Activated naive CD4-positive, alpha-beta T cell treated with anti-CD3 and anti-CD28 coated beads for 36 hours (primary cell): ENCODE measurements at regions of chr14 and their contacts with region 1.

Region 1: GRCh38 chr14:22918804-22919600 is at the start of gene RBM23:
- DNase-seq: peak; percentile 100
- H3K4me3 Mint-ChIP-seq: peak within 1 kb of the TSS; percentile 94
- H3K27ac Mint-ChIP-seq: peak within 1 kb of the TSS; percentile 99
- H3K4me1 Mint-ChIP-seq: peaks cover 42% of the 10 kb centered on the region
- H3K27me3 Mint-ChIP-seq: peaks cover 3% of the 10 kb centered on the region
- total RNA-seq, gene RBM23: 53.5 to 61.2 TPM

Region 2: GRCh38 chr14:22589096-22589839 is 329.7 kb before region 1 on chr14 and contains the start of gene DAD1:
- CTCF ChIA-PET with region 1: no interaction called
- intact Hi-C with region 1: loop called (anchors 1 kb)
- DNase-seq: peak; percentile 100
- H3K4me3 Mint-ChIP-seq: peak within 1 kb of the TSS; percentile 98
- H3K27ac Mint-ChIP-seq: peak within 1 kb of the TSS; percentile 99
- H3K4me1 Mint-ChIP-seq: peaks cover 68% of the 10 kb centered on the region
- H3K27me3 Mint-ChIP-seq: no peaks in the 10 kb centered on the region
- total RNA-seq, gene DAD1: 219 to 226 TPM

Region 3: DNA sequence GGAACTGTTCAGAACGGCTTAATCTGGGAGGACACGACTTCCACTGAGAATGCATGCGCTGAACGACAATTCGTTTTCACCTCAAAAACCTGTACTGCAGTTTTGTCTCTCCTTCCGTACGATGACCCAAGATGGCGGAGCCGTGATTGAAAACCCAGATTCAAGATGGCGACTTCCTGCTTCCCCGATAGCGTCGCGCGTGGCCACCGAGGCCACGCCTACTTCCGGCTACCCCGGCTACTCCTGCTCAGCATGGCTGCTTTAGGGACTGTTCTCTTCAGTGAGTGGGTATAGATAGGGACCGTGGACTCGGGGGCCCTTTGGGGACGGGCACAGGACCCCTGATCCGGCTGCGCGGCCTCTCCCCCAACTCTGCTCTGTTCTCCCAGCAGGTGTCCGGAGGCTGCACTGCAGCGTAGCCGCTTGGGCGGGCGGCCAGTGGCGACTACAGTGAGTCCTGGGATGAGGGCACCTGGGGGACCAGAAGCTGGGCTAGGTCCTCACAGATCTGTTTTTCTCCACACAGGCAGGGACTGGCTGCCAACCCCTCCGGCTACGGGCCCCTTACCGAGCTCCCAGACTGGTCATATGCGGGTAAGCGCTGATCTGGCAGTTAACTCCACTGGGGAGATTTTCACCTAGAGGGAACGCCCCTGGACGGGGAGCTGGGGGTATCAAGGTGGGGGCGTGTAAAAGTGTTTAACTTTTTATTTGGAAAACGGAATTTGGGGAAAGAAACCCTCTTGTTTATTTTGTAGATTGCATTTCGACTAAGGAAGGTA is 89.2 kb before region 1 on chr14 and contains the start of gene MRPL52:
- CTCF ChIA-PET with region 1: interaction called, 5 read pairs
- intact Hi-C with region 1: loop called (anchors 2 kb)
- DNase-seq: peak; percentile 94
- H3K4me3 Mint-ChIP-seq: peak within 1 kb of the TSS; percentile 94
- H3K27ac Mint-ChIP-seq: peak within 1 kb of the TSS; percentile 97
- H3K4me1 Mint-ChIP-seq: peaks cover 34% of the 10 kb centered on the region
- H3K27me3 Mint-ChIP-seq: no peaks in the 10 kb centered on the region
- total RNA-seq, gene MRPL52: 170 TPM

Region 4: DNA sequence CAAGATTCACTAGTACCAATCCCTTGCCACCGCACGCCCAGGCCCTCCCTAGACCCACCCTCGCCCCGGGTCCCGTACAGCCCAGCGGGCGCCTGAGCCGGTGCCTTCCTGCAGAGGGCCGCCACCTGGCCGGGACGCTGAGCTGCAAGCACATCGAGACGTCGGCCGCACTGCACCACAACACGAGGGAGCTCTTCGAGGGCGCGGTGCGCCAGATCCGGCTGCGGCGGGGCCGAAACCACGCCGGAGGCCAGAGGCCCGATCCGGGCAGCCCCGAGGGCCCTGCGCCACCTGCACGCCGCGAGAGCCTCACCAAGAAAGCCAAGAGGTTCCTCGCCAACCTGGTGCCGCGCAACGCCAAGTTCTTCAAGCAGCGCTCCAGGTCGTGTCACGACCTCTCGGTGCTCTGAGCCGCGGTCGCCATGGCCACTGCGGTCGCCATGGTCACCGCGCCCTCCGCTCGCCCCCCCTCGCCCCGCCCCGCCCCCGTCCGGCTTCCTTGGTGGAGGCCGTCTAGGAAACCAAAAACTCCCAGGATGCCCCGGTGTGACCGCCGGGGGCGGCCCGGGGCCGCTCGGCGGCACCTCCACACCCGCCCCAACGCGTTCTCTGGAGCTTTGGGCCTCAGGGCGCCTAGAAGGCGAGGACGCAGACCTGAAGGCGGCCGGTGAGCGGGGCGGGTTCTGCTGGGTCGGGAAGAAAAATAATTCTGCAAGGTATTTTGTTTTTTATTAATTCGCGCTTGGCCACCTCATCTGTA is 32.3 kb before region 1 on chr14:
- CTCF ChIA-PET with region 1: interaction called, 6 read pairs
- intact Hi-C with region 1: loop called (anchors 1 kb)
- DNase-seq: peak; percentile 87
- H3K4me3 Mint-ChIP-seq: peak overlapping the region; percentile 83
- H3K27ac Mint-ChIP-seq: peak overlapping the region; percentile 84
- H3K4me1 Mint-ChIP-seq: peaks cover 50% of the 10 kb centered on the region
- H3K27me3 Mint-ChIP-seq: peaks cover 2% of the 10 kb centered on the region

Region 5: GRCh38 chr14:22955702-22956569 is 36.9 kb after region 1 on chr14:
- CTCF ChIA-PET with region 1: no interaction called
- intact Hi-C with region 1: loop called (anchors 1 kb)
- DNase-seq: no peak
- H3K4me3 Mint-ChIP-seq: peak overlapping the region; percentile 89
- H3K27ac Mint-ChIP-seq: peak overlapping the region; percentile 84
- H3K4me1 Mint-ChIP-seq: peaks cover 22% of the 10 kb centered on the region
- H3K27me3 Mint-ChIP-seq: no peaks in the 10 kb centered on the region

Region 6: DNA sequence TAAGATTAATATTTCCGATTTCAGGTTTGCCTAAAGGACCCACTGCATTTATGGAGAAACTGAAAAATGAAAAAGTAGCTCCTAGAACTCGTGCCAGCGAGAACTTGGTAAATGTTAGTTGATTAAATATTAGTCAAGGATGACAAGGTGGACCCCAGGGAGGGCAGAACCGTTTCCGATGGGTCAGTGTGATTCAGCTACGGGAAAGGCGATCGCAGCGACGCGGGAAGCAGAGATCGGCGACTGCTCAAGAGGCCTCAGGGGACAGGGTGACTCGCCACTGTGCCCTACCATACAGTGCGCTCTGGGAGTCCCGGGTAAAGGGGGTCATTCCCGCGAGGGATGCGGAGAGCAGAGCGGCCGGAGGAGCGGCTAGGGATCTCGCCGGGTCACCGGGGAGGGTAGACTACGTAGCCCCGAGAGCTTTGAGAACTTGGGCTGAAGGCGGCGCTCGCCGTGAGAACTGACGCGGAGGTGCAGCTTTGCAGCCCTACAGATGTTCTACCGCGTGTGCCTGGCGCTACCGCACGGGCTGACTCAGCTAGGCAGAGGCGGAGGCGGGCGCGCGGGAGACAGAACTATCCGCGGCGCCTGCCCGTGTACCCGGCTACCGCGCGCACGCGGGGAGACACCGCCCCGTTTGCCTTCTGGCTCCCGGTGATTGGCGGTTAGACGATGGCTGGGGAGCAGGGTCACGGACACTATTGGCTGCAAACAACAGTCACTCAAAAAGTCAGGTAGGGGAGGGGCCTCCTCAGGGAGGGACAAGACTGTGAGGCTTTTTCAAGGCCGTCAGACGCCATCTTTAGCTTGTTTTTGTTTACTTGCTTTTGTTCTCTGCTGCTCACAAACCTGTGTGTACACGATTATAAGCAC is 87.8 kb after region 1 on chr14:
- CTCF ChIA-PET with region 1: no interaction called
- intact Hi-C with region 1: loop called (anchors 1 kb)
- DNase-seq: peak; percentile 99
- H3K4me3 Mint-ChIP-seq: peak overlapping the region; percentile 96
- H3K27ac Mint-ChIP-seq: peak overlapping the region; percentile 98
- H3K4me1 Mint-ChIP-seq: peaks cover 36% of the 10 kb centered on the region
- H3K27me3 Mint-ChIP-seq: no peaks in the 10 kb centered on the region

Region 7: GRCh38 chr14:23034483-23035302 is 115.7 kb after region 1 on chr14 and contains the start of gene PSMB5:
- CTCF ChIA-PET with region 1: no interaction called
- intact Hi-C with region 1: loop called (anchors 1 kb)
- DNase-seq: peak; percentile 96
- H3K4me3 Mint-ChIP-seq: peak within 1 kb of the TSS; percentile 88
- H3K27ac Mint-ChIP-seq: peak within 1 kb of the TSS; percentile 96
- H3K4me1 Mint-ChIP-seq: peaks cover 34% of the 10 kb centered on the region
- H3K27me3 Mint-ChIP-seq: no peaks in the 10 kb centered on the region
- total RNA-seq, gene PSMB5: 120 to 125 TPM